GM12878 (cell line): ENCODE measurements at regions of chr6 and their contacts with region 1.

Region 1: DNA sequence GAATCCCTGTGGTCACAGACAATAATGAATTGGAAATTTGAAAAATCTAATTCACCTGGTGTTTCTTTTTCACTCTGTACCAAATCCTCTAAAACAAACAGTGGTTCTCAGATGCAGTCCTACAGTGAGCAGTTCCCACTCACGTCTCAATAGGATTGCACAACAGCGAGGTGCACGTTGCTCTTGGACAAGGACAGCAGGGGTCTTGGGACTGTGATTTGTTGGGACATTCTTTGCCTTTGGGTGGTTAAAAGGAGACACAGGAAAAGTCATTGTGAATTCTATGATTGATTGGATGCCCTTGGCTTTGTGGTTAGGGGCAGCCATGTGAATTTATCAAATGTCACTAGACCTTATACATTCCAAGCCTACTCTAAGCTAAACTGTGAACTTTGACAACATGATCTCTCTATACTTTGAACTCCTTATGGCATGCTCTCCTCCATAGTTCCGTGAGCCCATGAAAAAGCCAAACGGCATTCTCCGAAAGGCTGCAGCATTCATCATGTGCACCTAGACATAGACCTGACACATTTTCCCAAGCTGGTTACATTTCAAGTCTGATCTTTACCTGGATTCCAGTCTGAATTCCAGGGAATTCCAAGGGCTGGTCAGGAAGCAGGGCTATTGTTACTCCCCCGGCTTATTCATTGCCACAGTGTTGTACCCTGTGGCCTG is 647 bp downstream of the UNC93A start:
- DNase-seq: no peak
- ATAC-seq: no peak
- H3K4me3 ChIP-seq: no peak overlapping the region
- H3K27ac ChIP-seq: no peak overlapping the region
- H3K4me1 ChIP-seq: no peaks in the 10 kb centered on the region
- H3K27me3 ChIP-seq: no peaks in the 10 kb centered on the region; a peak in 2 of 4 replicates
- CTCF ChIP-seq: no peak
- EP300 ChIP-seq: no peak
- POLR2A ChIP-seq: no peak
- RAD21 ChIP-seq: no peak

Region 2: GRCh38 chr6:166743406-166744222 is 548.1 kb before region 1 on chr6:
- CTCF ChIA-PET with region 1: no interaction called
- POLR2A ChIA-PET with region 1: no interaction called
- RAD21 ChIA-PET with region 1: no interaction called
- SMC1A ChIA-PET with region 1: no interaction called
- in situ Hi-C with region 1: no loop called
- intact Hi-C with region 1: no loop called
- DNase-seq: no peak
- ATAC-seq: no peak
- H3K4me3 ChIP-seq: no peak overlapping the region
- H3K27ac ChIP-seq: no peak overlapping the region
- H3K4me1 ChIP-seq: no peaks in the 10 kb centered on the region
- H3K27me3 ChIP-seq: no peaks in the 10 kb centered on the region; a peak in 1 of 4 replicates
- CTCF ChIP-seq: no peak
- EP300 ChIP-seq: no peak
- POLR2A ChIP-seq: no peak
- RAD21 ChIP-seq: no peak

Region 3: DNA sequence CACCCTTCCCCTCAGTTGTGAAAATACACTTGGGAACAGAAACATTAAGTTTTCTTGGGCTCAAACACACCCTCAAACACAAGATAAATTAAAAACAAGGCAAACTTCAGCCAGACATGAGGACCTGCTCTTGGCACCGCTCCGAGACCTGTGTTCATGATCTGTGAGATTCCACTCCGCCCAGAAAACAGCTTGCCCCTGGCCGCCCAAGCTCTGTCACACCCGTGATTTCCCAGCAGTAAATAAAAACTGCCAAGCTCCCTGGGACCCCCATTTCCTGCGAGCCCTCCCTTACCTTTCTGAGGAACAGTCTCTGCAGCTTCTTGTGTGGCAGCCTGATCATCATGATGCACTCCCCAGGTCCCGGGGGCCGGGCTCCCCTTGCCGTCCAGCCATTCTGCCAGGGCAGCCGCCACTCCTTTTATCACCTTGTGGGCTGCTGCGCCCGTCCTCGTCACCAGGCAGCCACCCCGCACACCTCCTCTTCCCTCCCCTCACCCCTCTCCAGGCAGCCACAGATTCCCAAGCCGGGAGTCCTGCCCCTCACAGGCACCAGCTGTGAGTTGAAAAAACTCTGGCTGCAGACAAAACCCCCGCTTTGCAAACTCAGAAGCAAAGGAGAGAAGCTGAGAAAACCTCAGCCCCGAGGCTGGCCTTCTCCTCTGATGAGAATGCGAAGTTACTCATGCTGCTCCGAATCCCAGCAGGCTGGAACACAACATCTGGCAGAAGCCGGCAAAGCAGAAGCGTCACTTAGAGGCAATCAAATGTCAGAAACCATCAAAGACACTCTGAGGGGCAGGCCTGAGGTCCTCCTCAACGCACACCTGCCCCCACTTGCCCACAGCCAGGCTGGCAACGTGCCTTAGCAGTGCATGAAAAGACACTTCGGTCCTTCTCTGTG is 534.3 kb before region 1 on chr6:
- CTCF ChIA-PET with region 1: no interaction called
- POLR2A ChIA-PET with region 1: no interaction called
- RAD21 ChIA-PET with region 1: no interaction called
- SMC1A ChIA-PET with region 1: no interaction called
- in situ Hi-C with region 1: no loop called
- intact Hi-C with region 1: no loop called
- DNase-seq: no peak
- ATAC-seq: no peak
- H3K4me3 ChIP-seq: no peak overlapping the region
- H3K27ac ChIP-seq: no peak overlapping the region
- H3K4me1 ChIP-seq: no peaks in the 10 kb centered on the region
- H3K27me3 ChIP-seq: no peaks in the 10 kb centered on the region; a peak in 2 of 4 replicates
- CTCF ChIP-seq: no peak
- EP300 ChIP-seq: no peak
- POLR2A ChIP-seq: no peak
- RAD21 ChIP-seq: no peak

Region 4: GRCh38 chr6:166775180-166776081 is 516.3 kb before region 1 on chr6:
- CTCF ChIA-PET with region 1: interaction called, 15 read pairs
- POLR2A ChIA-PET with region 1: no interaction called
- RAD21 ChIA-PET with region 1: interaction called, 7 read pairs
- SMC1A ChIA-PET with region 1: interaction called, 3 read pairs
- in situ Hi-C with region 1: loop called (anchors 5 kb)
- intact Hi-C with region 1: loop called (anchors 5 kb)
- DNase-seq: no peak
- ATAC-seq: peak; percentile 94
- H3K4me3 ChIP-seq: no peak overlapping the region
- H3K27ac ChIP-seq: no peak overlapping the region
- H3K4me1 ChIP-seq: no peaks in the 10 kb centered on the region
- H3K27me3 ChIP-seq: peaks cover 0 to 2% of the 10 kb centered on the region in 2 experiments; a peak in 1 of 4 replicates
- CTCF ChIP-seq: peak; percentile 84 to 91 (median 88)
- EP300 ChIP-seq: no peak
- POLR2A ChIP-seq: no peak
- RAD21 ChIP-seq: peak; percentile 96